Esophagus squamous epithelium (tissue), 5 donors: ENCODE measurements at regions of chr9 and their contacts with region 1.

Region 1: DNA sequence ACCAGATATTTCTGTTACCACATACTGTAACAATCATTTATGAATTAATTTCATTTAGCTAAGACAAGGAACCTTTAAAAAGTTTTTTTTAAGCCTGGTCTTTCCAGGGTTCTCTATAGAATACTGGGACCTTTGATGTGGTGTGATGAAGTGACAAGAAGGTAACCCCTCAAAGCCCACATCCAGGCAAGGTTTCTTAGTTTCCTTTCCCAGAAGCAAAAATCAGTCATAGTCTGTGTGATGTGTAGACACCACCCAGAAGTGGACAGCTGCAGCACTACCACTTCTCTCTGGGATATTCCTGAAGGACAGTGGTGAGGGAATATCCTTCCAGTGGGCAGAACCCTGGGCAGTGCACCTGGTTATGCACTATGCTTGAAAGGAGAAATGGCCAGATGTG is 115.6 kb downstream of the TTC39B start:
- DNase-seq: no peak
- H3K4me3 ChIP-seq: no peak overlapping the region
- H3K27ac ChIP-seq: no peak overlapping the region
- H3K4me1 ChIP-seq: no peaks in the 10 kb centered on the region
- H3K27me3 ChIP-seq: no peaks in the 10 kb centered on the region
- CTCF ChIP-seq: no peak
- POLR2A ChIP-seq: no peak

Region 2: DNA sequence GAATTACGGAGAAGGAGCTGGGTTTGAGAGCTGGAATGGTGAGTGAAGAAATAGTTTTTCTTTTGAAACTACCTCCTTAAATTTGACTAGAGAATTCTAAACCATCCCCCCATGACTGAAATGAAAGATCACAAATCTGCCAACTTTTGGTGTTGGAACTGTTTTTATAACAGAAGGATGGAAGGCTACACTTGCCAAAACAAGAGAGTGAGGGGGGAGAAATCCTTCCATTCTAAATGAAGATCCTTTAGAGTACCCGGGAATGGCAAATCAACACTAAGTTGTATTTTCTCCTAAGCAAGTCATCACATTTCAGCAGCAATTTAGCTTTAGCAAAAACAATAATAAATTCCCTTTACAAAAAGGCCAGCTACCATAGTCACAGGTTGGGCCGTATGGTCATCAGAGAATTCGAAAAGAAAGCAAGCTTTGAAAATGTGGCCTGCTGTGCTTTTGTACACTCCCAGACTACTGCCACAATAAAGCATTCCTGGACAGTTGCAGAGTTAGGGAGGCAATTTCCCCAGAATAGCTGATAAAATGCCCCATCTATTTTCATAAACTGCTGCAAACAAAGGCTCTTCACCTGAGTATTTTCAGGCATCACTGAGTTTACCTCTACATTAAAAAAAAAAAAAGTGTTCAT is 256.1 kb before region 1 on chr9:
- intact Hi-C with region 1: no loop called
- DNase-seq: no peak
- H3K4me3 ChIP-seq: no peak overlapping the region
- H3K27ac ChIP-seq: no peak overlapping the region
- H3K4me1 ChIP-seq: no peaks in the 10 kb centered on the region
- H3K27me3 ChIP-seq: no peaks in the 10 kb centered on the region
- CTCF ChIP-seq: no peak
- POLR2A ChIP-seq: no peak

Region 3: GRCh38 chr9:15612962-15613361 is 421.6 kb after region 1 on chr9:
- intact Hi-C with region 1: loop called (anchors 10 kb)
- DNase-seq: no peak
- H3K4me3 ChIP-seq: no peak overlapping the region
- H3K27ac ChIP-seq: no peak overlapping the region
- H3K4me1 ChIP-seq: no peaks in the 10 kb centered on the region
- H3K27me3 ChIP-seq: no peaks in the 10 kb centered on the region
- CTCF ChIP-seq: no peak
- POLR2A ChIP-seq: no peak